ENCODE measurements at regions of chr3 and their contacts with region 1.

Region 1: DNA sequence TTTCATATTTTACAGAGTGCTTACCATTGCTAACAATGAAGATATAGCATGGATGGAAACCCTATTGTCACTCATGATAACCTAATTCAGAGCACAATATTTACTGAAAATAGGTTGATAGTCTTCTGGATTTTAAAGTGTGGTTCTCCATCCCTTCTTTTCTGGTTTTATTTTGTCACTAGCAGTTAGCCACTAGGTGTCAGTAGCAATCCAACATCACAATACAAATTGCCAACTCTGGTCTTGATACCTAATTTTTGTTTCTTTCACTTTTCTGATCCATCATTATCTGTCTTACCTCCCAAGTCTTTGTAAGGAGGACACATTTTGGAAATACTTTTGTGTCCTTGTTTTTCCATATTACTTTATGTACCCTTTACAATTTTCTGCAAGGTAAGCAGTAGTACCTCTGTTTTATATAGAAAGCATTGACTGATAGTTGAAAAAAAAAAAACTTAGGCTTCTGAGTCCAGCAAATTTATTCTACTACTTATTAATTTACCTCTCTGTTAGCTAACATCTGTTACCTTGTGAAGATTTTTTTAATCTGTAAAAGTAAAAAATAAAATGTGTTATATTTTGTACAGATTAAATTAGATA is 28.3 kb upstream of the CRYBG3 start:
- DNase-seq: peak in 1 of 6 donors; percentile 11
- ATAC-seq: peak in 3 of 4 donors; percentile 75 to 78 (median 78)
- H3K4me3 ChIP-seq: no peak overlapping the region
- H3K27ac ChIP-seq: no peak overlapping the region
- H3K4me1 ChIP-seq: no peaks in the 10 kb centered on the region
- H3K27me3 ChIP-seq: no peaks in the 10 kb centered on the region
- CTCF ChIP-seq: peak; percentile 40 to 74 (median 64)

Region 2: GRCh38 chr3:97863031-97863430 is 69.5 kb after region 1 on chr3:
- intact Hi-C with region 1: no loop called
- DNase-seq: no peak
- ATAC-seq: no peak
- H3K4me3 ChIP-seq: no peak overlapping the region
- H3K27ac ChIP-seq: no peak overlapping the region
- H3K4me1 ChIP-seq: peaks cover 0 to 4% (median 0%) of the 10 kb centered on the region in 3 donors
- H3K27me3 ChIP-seq: no peaks in the 10 kb centered on the region
- CTCF ChIP-seq: no peak

Region 3: DNA sequence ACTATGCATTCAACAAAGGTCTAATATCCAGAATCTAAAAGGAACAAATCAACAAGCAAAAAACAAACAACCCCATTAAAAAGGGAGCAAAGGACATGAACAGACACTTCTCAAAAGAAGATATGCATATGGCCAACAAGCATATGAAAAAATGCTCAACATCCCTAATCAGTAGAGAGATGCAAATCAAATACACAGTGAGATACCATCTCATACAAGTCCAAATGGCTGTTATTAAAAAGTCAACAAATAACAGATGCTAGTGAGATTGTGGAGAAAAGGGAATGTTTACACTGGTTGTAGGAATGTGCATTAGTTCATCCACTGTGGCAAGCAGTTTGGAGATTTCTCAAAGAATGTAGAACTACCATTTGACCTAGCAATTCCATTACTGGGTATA is 134.1 kb after region 1 on chr3:
- intact Hi-C with region 1: no loop called
- DNase-seq: no peak
- ATAC-seq: no peak
- H3K4me3 ChIP-seq: no peak overlapping the region
- H3K27ac ChIP-seq: no peak overlapping the region
- H3K4me1 ChIP-seq: no peaks in the 10 kb centered on the region
- H3K27me3 ChIP-seq: no peaks in the 10 kb centered on the region
- CTCF ChIP-seq: no peak

Region 4: DNA sequence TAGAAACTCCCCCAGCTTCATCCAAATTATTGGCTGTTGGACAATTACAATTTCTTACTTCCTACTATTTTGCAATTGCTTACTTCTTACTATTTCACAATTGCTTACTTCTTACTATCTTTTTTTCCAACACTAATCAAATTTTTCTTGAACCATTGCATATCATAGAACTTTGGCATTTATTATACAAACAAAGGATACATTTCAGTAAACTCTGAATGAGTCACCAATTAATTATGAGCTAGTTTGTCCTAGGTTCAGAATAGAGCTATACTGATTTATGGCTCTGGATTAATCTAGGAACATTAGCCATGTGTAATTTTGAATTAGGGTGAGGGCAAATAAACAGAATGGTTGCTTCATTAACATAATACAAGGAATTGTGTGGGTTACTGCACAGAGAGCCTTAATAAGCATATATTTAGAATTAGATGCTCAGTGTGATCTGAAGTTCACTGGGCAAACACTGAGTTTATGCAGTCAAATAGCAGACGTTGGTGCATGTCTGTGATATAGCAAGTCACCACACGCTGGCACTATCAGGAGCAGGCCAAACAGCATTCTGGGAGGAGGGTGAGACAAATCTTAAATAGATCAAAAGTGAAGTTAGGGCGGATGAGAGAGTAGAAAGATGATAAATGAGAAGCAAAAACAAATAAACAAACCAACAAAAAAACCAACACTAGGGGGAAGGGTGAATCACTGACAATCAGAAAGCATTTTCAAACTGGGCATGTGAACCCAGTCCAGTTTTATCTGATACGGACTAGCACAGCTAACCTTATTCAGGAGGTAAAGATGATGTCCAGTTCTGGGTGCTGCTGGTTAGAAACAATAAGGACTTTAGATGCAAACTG is 220.1 kb after region 1 on chr3:
- intact Hi-C with region 1: loop called in 1 of 3 experiments (anchors 10 kb)
- DNase-seq: no peak
- ATAC-seq: peak in 3 of 4 donors; percentile 60 to 63 (median 62)
- H3K4me3 ChIP-seq: no peak overlapping the region
- H3K27ac ChIP-seq: no peak overlapping the region
- H3K4me1 ChIP-seq: peaks cover 0 to 15% (median 13%) of the 10 kb centered on the region in 3 donors
- H3K27me3 ChIP-seq: no peaks in the 10 kb centered on the region
- CTCF ChIP-seq: no peak

Region 5: DNA sequence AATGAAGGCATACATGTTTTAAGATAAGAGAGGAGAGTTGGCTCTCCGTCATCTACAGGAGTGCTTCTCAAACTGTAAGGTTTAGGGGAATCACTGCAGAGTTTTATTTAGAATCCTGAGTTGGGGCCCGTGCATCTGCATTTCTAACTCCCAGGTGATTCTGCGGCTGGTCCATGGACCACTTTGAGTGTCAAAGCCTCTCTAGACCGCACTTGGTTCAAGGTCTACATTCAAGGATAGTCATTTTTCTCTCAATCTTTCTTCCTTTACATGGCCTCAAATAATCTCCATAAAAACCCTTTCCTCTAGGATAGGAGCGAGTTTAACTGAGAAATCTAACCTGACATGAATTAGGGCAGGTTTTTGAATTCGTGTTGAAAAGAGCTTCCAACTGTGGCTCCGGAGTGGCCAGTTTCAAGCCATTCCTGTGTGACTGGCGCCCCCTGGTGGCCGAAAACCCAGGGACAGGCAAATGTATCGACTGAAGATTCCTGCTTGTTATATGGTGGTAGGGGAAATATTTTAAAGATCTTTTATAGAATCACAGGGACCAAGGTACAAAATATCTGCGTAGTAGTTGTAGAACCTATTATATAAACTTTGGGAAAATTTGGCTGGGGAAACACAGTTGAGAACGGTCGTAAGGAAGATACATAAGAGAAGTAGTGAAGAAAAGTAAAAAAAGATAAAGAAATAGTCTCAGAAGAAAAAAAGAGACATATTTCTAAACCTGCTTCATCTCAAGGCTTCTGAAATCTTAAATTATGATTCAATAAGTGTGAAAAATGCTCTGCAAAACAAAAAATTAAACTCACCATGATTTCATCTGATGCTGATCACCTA is 229.7 kb after region 1 on chr3:
- intact Hi-C with region 1: loop called (anchors 5 to 10 kb)
- DNase-seq: peak; percentile 66 to 100 (median 90)
- ATAC-seq: peak; percentile 89 to 96 (median 93)
- H3K4me3 ChIP-seq: no peak overlapping the region
- H3K27ac ChIP-seq: no peak overlapping the region
- H3K4me1 ChIP-seq: no peaks in the 10 kb centered on the region
- H3K27me3 ChIP-seq: no peaks in the 10 kb centered on the region
- CTCF ChIP-seq: peak; percentile 93 to 98 (median 96)